GM18951 (cell line): ENCODE measurements at regions of chr5 and their contacts with region 1.

Region 1: GRCh38 chr5:77645158-77645994 is 6.9 kb upstream of the OTP start:
- POLR2A ChIP-seq: no peak

Region 2: DNA sequence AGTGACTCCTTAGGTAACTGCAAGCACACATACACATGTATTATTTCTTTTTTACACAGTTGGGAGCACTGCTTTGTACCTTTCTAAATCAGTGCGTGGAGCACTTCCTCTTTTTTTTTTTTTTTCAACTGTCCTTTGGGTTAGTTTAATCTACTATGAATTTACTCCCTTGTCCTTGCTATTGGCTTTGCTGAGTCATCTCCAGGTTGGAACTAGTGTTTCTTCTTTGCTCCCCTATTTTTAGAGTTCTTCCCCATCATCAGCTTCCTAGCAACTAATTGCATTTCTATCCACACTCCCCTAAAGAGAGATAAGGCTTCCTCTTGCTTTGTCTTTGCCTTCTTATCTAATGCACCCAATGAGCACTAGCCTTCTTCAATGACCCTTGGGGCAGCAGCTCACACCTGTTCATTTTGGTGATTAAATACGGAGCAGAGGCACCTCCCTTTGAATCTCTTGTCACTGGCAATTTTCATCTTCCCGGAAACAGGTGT is 771.2 kb before region 1 on chr5:
- in situ Hi-C with region 1: no loop called
- POLR2A ChIP-seq: no peak

Region 3: GRCh38 chr5:77981818-77982217 is 336.4 kb after region 1 on chr5:
- in situ Hi-C with region 1: loop called (anchors 10 kb)
- POLR2A ChIP-seq: no peak

Region 4: DNA sequence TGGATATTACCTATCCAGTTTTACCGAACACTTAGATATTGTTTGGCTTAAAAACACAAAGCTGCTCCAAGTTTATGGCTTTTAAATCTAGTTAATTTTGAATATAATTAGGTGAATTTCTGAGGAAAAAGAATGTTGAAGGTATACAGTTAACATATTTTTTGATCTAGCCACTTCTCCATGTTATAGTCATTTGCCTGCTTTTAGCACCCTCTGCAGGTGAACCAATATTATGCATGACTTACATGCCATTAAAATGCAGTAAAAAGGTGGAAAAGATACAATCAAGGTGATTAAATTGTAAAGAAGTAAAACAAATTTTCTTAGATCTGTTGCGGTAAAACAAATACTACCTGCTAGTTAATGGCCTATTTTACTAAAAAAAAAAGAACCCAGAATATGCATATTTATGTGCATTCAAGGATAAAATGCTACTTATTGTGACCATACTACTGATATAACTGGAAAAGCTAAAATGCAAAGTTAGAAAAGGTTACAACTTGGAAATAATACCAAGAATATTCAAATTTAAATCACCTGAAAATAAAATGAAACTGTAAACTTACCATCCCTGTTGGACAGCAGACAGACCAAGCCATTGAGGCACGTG is 517.0 kb after region 1 on chr5:
- in situ Hi-C with region 1: loop called (anchors 10 kb)
- POLR2A ChIP-seq: no peak